Activated T-helper 1 cell treated with anti-CD3 and anti-CD28 coated beads, Interleukin-12 subunit alpha, Interleukin-12 subunit beta, Interleukin-2, Interleukin-4 antibody, amounts not matched to agents 30 ng/mL and 10 ng/mL and 1 ng/mL, durations not matched to agents 14 hours and 24 hours and 36 hours (primary cell): ENCODE measurements at regions of chr5 and their contacts with region 1.

Region 1: GRCh38 chr5:42908509-42909488 is 97.1 kb upstream of the SELENOP start:
- DNase-seq: peak; percentile 84
- H3K4me3 Mint-ChIP-seq: peak overlapping the region; percentile 81
- H3K27ac Mint-ChIP-seq: peak overlapping the region; percentile 50
- H3K4me1 Mint-ChIP-seq: peaks cover 12% of the 10 kb centered on the region
- H3K27me3 Mint-ChIP-seq: peaks cover 26% of the 10 kb centered on the region

Region 2: GRCh38 chr5:42522783-42523182 is 386.0 kb before region 1 on chr5:
- intact Hi-C with region 1: no loop called
- DNase-seq: no peak
- H3K4me3 Mint-ChIP-seq: no peak overlapping the region
- H3K27ac Mint-ChIP-seq: no peak overlapping the region
- H3K4me1 Mint-ChIP-seq: no peaks in the 10 kb centered on the region
- H3K27me3 Mint-ChIP-seq: no peaks in the 10 kb centered on the region

Region 3: DNA sequence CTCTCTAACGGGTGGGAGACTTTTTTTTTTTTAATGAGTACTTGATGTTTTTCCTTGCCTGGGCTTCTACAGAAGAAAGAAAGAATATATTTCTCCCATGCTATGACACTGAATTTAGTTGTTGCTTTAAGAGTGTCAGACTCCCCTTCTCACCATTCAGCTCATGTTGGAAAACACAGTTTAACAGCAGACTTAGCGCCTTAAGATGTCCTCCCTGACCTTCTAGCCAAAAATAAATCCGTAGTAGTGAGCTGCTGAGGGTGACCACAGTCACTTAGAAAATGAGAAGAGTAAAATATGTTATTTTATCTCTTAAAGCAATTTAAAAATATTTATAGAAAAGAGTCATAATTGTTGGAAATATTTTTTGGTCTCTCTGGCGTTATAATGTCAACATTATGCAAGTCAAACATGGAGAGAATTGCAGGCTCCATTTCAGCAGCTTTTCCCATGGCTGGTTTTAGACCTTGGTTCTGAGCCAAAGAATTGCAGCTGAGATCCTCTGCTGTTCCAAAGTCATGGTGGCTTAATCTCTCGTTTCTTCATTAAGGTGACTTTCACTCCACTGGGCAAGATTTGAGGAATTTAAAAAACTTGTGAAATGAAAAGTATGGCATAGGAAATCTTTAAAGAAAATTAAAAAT is 342.0 kb before region 1 on chr5:
- intact Hi-C with region 1: no loop called
- DNase-seq: no peak
- H3K4me3 Mint-ChIP-seq: no peak overlapping the region
- H3K27ac Mint-ChIP-seq: no peak overlapping the region
- H3K4me1 Mint-ChIP-seq: no peaks in the 10 kb centered on the region
- H3K27me3 Mint-ChIP-seq: peaks cover 11% of the 10 kb centered on the region

Region 4: DNA sequence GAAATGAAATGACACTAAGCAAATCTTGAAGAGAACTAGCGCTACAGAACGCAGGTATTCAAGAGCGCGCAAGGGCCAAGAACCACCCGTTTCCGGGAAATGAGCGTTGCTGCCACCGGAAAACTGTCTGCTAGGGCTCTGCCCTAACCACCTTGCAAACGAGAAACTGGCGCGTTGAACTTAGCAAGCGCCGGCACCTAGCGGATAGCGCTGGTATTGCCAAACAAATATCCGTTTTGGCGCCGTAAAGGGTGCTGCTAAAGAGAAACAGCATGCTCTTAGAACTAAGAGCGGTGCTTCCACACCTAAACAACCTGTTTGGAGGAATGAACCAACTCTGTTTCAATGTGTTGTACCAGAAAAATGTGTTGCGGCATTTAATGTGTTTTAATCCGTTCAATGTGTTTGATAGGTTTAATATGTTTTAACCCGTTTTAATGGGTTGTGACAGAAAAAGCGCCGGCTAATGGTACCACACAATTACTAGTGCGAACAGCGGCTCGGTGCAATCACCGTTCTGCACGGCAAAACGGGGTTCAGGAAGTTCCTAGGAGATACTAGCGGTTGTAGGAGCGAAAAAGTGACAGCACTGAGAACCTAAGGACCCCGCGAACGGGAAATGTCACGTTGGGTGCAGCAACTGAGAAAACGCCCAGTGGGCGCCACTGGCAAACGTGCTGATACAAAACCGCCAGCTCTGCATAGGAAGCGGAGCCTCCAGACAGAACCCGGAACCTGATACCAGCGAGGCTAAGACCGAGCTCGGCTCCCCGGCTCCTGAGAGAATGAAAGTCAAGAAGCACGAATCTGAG is 131.7 kb after region 1 on chr5 and contains the start of gene ANXA2R:
- intact Hi-C with region 1: loop called (anchors 1 kb)
- DNase-seq: peak; percentile 93
- H3K4me3 Mint-ChIP-seq: peak within 1 kb of the TSS; percentile 82
- H3K27ac Mint-ChIP-seq: peak within 1 kb of the TSS; percentile 86
- H3K4me1 Mint-ChIP-seq: peaks cover 59% of the 10 kb centered on the region
- H3K27me3 Mint-ChIP-seq: no peaks in the 10 kb centered on the region
- total RNA-seq, gene ANXA2R: 0.88 and 0.93 TPM in 2 replicates